Caco-2 (cell line): ENCODE measurements at regions of chr5 and their contacts with region 1.

Region 1: GRCh38 chr5:170479484-170479883 is 24.3 kb upstream of the KCNIP1 start:
- DNase-seq: peak in 1 of 2 experiments; percentile 44
- H3K4me3 ChIP-seq: no peak overlapping the region
- H3K4me3 Mint-ChIP-seq: no peak overlapping the region
- H3K27ac Mint-ChIP-seq: no peak overlapping the region
- H3K4me1 ChIP-seq: peaks cover 6% of the 10 kb centered on the region
- H3K4me1 Mint-ChIP-seq: peaks cover 18% of the 10 kb centered on the region
- H3K27me3 ChIP-seq: no peaks in the 10 kb centered on the region
- H3K27me3 Mint-ChIP-seq: no peaks in the 10 kb centered on the region
- CTCF ChIP-seq: peak in 1 of 2 experiments; percentile 22

Region 2: GRCh38 chr5:170420780-170421412 is 58.6 kb before region 1 on chr5:
- CTCF ChIA-PET with region 1: no interaction called
- POLR2A ChIA-PET with region 1: no interaction called
- intact Hi-C with region 1: no loop called
- DNase-seq: peak; percentile 64 to 65
- H3K4me3 ChIP-seq: no peak overlapping the region
- H3K4me3 Mint-ChIP-seq: no peak overlapping the region
- H3K27ac Mint-ChIP-seq: no peak overlapping the region
- H3K4me1 ChIP-seq: peaks cover 3% of the 10 kb centered on the region; the same call in 1 of the 2 replicates
- H3K4me1 Mint-ChIP-seq: no peaks in the 10 kb centered on the region
- H3K27me3 ChIP-seq: no peaks in the 10 kb centered on the region; the same call in 1 of the 2 replicates
- H3K27me3 Mint-ChIP-seq: peaks cover 20% of the 10 kb centered on the region
- CTCF ChIP-seq: peak; percentile 59 to 79

Region 3: DNA sequence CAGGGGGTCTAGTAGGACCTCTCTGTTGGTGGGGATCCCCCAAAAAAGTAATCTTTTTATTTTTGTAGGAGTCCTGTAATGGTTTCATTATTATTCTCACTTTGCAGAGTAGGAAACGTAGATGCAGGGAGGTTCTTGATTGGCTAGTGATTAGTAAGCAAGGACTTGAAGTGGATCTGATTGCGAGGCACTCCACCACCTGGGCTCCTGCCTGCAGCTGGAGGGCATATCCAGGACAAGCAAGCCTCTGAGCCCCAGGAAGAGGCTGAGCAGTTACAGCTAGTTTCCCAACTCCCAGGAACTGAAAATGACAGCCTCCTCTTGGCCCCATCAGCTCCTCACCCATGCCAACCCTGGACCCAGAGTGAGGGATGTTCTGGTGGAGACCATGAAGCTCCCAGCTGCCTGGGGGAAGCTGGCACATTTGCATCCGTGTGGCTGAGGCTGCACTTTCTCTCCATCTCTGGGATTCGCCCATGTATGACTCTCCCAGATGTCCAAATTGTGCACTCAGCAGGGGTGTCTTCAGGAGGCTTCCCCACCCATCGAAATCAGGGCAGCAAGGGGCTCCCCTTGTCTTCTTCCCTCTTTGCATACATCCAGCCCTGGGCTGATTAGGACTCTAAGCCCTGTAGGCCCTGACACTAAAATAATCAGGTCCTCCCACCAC is 34.5 kb after region 1 on chr5:
- CTCF ChIA-PET with region 1: no interaction called
- POLR2A ChIA-PET with region 1: no interaction called
- intact Hi-C with region 1: no loop called
- DNase-seq: no peak
- H3K4me3 ChIP-seq: no peak overlapping the region
- H3K4me3 Mint-ChIP-seq: no peak overlapping the region
- H3K27ac Mint-ChIP-seq: no peak overlapping the region
- H3K4me1 ChIP-seq: 0 out of 2 replicates have a peak, but pooled peaks cover under 1% of the 10 kb centered on the region
- H3K4me1 Mint-ChIP-seq: peaks cover 2% of the 10 kb centered on the region
- H3K27me3 ChIP-seq: no peaks in the 10 kb centered on the region
- H3K27me3 Mint-ChIP-seq: no peaks in the 10 kb centered on the region
- CTCF ChIP-seq: no peak

Region 4: DNA sequence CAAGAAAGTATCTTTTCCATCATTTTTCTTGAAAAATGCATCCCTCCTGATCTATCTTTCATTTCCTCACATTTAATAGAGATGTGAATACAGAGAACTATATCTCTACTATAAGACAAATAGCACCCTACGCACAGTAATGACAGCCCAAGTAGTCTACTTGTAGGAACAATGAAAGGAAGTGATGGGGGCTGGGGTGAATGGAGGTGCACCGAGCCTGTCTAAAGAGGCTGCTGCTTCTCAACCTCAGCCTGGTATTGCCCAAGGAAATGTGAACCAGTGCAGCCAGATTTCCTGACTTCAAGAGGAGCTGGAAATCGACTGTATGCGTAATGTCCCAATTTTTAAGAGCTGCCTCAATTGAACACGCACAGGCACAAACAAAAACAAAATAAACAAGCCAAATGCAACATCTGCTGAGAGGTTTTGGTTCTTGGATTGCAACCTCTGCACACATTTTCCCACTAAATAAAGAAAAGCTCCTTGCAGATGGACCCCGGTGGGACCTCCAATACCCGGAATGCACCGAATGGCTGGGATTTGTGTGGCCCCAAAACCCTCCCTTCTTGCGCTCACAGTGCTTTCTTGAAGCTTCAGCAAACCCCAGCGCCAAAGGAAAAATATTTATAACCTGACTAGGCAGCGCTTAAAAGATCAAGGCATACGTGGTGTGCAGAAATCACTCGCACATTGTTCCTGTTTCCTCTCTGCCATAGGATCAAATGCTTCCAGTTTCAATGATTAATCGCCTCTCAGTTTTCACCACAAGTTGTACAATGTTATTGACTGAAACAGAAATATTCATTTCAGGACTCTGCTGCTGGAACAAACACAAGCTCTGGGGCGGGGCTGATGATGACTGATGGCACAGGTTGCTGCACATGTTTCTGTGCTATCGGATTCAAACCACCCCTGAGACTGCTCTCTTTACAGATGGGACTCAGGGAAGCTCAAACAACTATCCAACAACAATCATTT is 92.7 kb after region 1 on chr5:
- CTCF ChIA-PET with region 1: no interaction called
- POLR2A ChIA-PET with region 1: no interaction called
- intact Hi-C with region 1: loop called (anchors 1 kb)
- DNase-seq: no peak
- H3K4me3 ChIP-seq: no peak overlapping the region
- H3K4me3 Mint-ChIP-seq: no peak overlapping the region
- H3K27ac Mint-ChIP-seq: no peak overlapping the region
- H3K4me1 ChIP-seq: 0 out of 2 replicates have a peak, but pooled peaks cover 9% of the 10 kb centered on the region
- H3K4me1 Mint-ChIP-seq: peaks cover 12% of the 10 kb centered on the region
- H3K27me3 ChIP-seq: peaks cover 3% of the 10 kb centered on the region
- H3K27me3 Mint-ChIP-seq: peaks cover 18% of the 10 kb centered on the region
- CTCF ChIP-seq: no peak

Region 5: DNA sequence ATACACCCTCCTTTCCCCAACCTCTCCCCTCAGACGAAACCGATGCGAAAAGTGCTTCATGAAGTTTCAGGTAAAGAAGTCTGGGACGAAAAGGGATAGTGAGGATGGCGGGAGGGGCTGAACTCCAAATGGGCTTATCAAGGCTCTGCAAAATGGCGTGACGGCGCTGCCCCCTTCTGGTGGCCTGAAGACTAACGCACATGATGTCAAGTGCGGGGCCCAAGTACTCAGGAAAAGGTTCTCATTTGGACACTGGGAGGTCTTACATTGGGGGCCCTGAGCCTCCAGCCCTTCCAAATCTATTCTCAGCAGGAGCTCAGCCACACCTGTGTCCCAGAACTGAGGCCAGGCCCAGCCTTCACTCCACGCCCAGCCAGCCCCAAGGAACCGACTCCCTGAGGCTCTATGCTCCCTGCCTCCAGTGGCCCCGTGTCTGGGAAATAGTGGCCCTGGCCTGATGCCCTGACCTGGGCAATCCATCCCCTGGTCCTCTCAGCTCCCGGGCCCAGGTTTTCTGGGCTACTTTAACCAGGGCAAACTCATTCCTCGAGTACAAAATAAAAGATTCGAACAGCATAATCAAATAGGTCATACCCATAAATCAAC is 144.2 kb after region 1 on chr5:
- CTCF ChIA-PET with region 1: no interaction called
- POLR2A ChIA-PET with region 1: no interaction called
- intact Hi-C with region 1: loop called (anchors 1 kb)
- DNase-seq: peak in 1 of 2 experiments; percentile 63
- H3K4me3 ChIP-seq: no peak overlapping the region
- H3K4me3 Mint-ChIP-seq: no peak overlapping the region
- H3K27ac Mint-ChIP-seq: no peak overlapping the region
- H3K4me1 ChIP-seq: no peaks in the 10 kb centered on the region
- H3K4me1 Mint-ChIP-seq: no peaks in the 10 kb centered on the region
- H3K27me3 ChIP-seq: no peaks in the 10 kb centered on the region; the same call in none of the 2 replicates
- H3K27me3 Mint-ChIP-seq: peaks cover 10% of the 10 kb centered on the region
- CTCF ChIP-seq: peak; percentile 69 to 87